K562 (cell line): ENCODE measurements at regions of chr5 and their contacts with region 1.

Region 1: GRCh38 chr5:170633235-170634081 is 129.6 kb downstream of the KCNIP1 start:
- DNase-seq: peak; percentile 55 to 76 (median 70)
- ATAC-seq: peak; percentile 72
- H3K4me3 ChIP-seq: no peak overlapping the region
- H3K27ac ChIP-seq: no peak overlapping the region
- H3K4me1 ChIP-seq: peaks cover 4 to 11% of the 10 kb centered on the region in 2 experiments; a peak in 4 of 5 replicates
- H3K27me3 ChIP-seq: peaks cover 0 to 11% of the 10 kb centered on the region in 2 experiments; a peak in 1 of 5 replicates
- CTCF ChIP-seq: peak in 1 of 3 experiments; percentile 31; a peak in 1 of 6 replicates
- EP300 ChIP-seq: no peak
- POLR2A ChIP-seq: no peak
- RAD21 ChIP-seq: no peak; a peak in 1 of 4 replicates

Region 2: DNA sequence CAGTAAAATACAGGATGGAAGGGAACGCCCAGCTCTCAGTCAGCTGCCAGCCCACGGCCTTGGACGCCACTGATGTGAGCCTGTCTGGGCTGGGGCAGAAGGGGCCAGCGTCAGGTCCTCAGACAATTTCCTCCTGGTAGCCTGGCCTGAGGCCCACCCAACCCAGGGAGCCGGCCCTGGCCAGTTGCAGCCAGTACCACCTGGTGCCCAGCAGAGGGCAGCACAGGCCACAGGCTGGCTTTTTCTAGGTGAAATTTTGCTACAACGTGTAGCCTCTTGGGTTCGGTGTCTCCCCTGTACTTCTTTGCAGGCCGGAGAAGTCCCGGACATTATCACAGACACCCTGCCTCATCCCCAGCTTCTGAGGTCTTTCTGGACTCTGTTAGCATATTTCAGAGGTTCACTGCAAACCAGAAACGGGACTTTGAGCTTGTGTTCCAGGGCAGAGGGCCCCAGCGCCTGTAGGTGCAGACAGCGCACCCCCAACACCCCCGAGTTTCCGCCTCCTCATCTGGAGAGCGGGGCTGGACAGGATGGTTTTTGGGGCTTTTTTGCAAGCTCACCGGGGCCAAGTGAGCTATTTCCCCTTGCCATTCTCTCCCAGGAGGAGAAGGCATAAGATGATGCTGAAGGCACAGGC is 198.4 kb before region 1 on chr5:
- CTCF ChIA-PET with region 1: interaction called, 10 read pairs
- POLR2A ChIA-PET with region 1: interaction called, 3 read pairs
- in situ Hi-C with region 1: no loop called
- intact Hi-C with region 1: loop called (anchors 1 kb)
- DNase-seq: peak; percentile 62 to 76 (median 74)
- ATAC-seq: peak; percentile 96
- H3K4me3 ChIP-seq: no peak overlapping the region
- H3K27ac ChIP-seq: no peak overlapping the region
- H3K4me1 ChIP-seq: peaks cover 0 to 3% of the 10 kb centered on the region in 2 experiments; a peak in 1 of 5 replicates
- H3K27me3 ChIP-seq: peaks cover 2 to 40% of the 10 kb centered on the region in 2 experiments; a peak in 2 of 5 replicates
- CTCF ChIP-seq: peak; percentile 89 to 92 (median 90)
- EP300 ChIP-seq: no peak
- POLR2A ChIP-seq: no peak
- RAD21 ChIP-seq: peak; percentile 64 to 86

Region 3: DNA sequence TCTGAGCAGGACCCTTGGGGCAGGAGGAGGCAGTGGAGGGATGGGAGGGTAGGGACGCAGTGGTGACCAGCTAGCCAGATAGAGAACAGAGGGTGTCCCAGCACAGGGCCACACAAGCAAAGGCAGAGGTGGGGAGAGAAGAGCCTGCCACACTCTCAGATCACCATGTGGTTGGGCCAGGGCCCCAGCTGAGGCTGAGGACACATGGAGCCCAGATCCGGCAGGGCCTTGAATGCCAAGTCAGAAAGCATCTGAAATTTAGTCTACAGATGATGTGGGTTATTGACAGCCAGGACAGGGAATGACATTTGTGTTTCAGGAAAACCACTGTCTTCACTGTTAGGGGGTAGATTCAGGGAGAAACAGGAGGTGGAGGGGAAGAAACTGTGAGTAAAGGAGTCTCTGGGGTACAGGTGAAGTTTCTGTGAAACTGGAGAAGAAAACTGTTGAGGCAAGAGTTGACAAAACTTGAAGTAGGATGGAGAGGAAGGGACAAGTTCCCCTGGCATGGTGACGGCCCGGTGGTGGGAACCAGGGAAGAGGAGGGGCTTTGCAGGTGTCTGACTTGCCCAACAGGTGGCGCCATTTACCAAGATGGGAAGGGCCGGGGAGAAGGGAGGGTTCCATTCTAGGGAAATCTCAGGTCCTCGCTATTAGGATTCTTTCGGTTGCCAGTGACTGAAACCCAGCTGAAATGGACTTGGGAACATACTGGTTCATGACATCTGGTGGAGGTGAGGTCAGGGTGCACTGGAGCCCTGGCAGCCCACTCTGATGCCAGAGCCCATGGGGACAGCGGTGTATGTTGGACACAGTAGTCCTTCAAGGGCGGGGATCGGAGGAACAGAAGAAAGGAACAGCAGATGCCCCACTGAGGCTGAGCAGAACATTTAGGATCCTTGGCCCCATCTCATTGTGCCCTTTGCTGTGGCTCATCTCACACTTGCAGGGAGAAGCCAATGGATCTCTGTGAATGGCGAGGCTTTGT is 29.6 kb before region 1 on chr5:
- CTCF ChIA-PET with region 1: interaction called, 4 read pairs
- POLR2A ChIA-PET with region 1: no interaction called
- in situ Hi-C with region 1: no loop called
- intact Hi-C with region 1: loop called (anchors 1 kb)
- DNase-seq: peak; percentile 69 to 91 (median 88)
- ATAC-seq: peak; percentile 99
- H3K4me3 ChIP-seq: no peak overlapping the region
- H3K27ac ChIP-seq: no peak overlapping the region
- H3K4me1 ChIP-seq: no peaks in the 10 kb centered on the region
- H3K27me3 ChIP-seq: peaks cover 0 to 40% of the 10 kb centered on the region in 2 experiments; a peak in 1 of 5 replicates
- CTCF ChIP-seq: peak; percentile 77 to 84 (median 83)
- EP300 ChIP-seq: no peak
- POLR2A ChIP-seq: no peak
- RAD21 ChIP-seq: peak; percentile 32 to 72

Region 4: GRCh38 chr5:170880084-170880483 is 246.6 kb after region 1 on chr5:
- CTCF ChIA-PET with region 1: no interaction called
- POLR2A ChIA-PET with region 1: no interaction called
- in situ Hi-C with region 1: no loop called
- intact Hi-C with region 1: no loop called
- DNase-seq: no peak
- ATAC-seq: no peak
- H3K4me3 ChIP-seq: no peak overlapping the region
- H3K27ac ChIP-seq: no peak overlapping the region
- H3K4me1 ChIP-seq: no peaks in the 10 kb centered on the region
- H3K27me3 ChIP-seq: no peaks in the 10 kb centered on the region
- CTCF ChIP-seq: no peak
- EP300 ChIP-seq: no peak
- POLR2A ChIP-seq: no peak
- RAD21 ChIP-seq: no peak